ENCODE measurements at regions of chr22 and their contacts with region 1.

Region 1: DNA sequence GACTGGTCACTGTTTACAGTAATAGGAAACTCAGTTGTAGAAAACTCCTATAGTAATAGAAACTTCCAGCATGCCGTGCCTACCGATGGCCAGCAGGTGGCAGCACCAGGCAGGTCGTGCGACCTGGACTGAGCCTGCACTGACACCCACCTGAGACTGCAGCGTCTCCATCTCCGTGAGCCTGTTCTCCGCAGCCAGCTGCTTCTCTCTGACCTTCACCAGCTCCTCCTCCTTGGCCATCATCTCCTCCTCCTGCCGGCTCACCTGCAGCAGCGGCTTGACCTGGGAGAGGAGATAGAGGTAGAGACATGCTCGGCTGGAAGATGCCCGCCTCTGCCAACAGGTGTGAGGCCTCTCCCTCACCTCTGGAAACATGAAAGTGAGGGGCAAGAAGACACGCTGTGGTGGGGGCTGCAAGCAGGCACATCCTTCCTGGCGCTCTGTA is 48.5 kb downstream of the APOL1 start:
- DNase-seq: peak; percentile 73
- H3K4me3 Mint-ChIP-seq: no peak overlapping the region
- H3K27ac Mint-ChIP-seq: no peak overlapping the region
- H3K4me1 Mint-ChIP-seq: peaks cover 7% of the 10 kb centered on the region
- H3K27me3 Mint-ChIP-seq: no peaks in the 10 kb centered on the region
- CTCF ChIP-seq: peak; percentile 94

Region 2: DNA sequence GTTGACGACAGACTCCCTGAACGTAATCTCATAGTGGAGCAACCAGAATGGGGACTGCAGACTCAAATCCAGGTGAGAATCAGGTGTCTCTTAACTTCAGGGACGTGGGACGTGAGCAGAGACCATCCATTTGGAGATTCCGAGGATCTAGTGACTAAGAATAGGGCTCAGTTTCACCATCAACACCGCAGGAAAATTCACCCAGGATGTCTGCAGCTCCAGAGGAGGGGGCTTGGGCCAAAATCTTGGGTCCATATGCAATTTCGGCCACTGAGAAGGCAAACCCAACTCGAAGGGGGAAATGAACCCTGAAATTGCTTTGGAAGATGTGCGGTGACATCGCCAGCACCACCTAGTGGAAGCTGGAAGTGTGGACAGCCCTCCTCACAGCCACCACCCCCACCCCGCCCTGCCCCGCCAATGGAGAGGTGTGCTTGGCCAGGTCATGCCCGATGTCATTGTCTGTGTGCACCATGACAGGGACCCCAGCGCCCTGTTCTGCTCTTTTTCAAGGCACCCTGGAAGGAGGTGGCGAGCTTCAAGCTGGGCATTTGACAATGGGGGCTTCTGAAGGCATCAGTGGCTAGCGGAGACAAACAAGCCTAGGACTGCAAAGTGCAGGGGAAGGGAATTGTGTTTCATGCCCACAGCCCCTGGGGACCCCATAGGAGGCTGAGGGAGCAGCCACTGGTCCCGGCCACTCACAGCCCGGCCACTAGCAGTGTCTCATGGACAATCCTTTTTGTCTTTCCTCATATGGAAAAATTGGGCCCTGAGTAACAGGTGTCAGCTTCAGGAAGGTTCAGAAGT is 23.7 kb before region 1 on chr22:
- CTCF ChIA-PET with region 1: interaction called, 12 read pairs
- POLR2A ChIA-PET with region 1: no interaction called
- intact Hi-C with region 1: no loop called
- DNase-seq: peak; percentile 66
- H3K4me3 Mint-ChIP-seq: no peak overlapping the region
- H3K27ac Mint-ChIP-seq: peak overlapping the region; percentile 19
- H3K4me1 Mint-ChIP-seq: peaks cover 6% of the 10 kb centered on the region
- H3K27me3 Mint-ChIP-seq: no peaks in the 10 kb centered on the region
- CTCF ChIP-seq: peak; percentile 68

Region 3: GRCh38 chr22:36286471-36287224 is 14.8 kb before region 1 on chr22:
- CTCF ChIA-PET with region 1: interaction called, 18 read pairs
- POLR2A ChIA-PET with region 1: interaction called, 3 read pairs
- intact Hi-C with region 1: no loop called
- DNase-seq: peak; percentile 68
- H3K4me3 Mint-ChIP-seq: no peak overlapping the region
- H3K27ac Mint-ChIP-seq: no peak overlapping the region
- H3K4me1 Mint-ChIP-seq: no peaks in the 10 kb centered on the region
- H3K27me3 Mint-ChIP-seq: no peaks in the 10 kb centered on the region
- CTCF ChIP-seq: peak; percentile 89

Region 4: DNA sequence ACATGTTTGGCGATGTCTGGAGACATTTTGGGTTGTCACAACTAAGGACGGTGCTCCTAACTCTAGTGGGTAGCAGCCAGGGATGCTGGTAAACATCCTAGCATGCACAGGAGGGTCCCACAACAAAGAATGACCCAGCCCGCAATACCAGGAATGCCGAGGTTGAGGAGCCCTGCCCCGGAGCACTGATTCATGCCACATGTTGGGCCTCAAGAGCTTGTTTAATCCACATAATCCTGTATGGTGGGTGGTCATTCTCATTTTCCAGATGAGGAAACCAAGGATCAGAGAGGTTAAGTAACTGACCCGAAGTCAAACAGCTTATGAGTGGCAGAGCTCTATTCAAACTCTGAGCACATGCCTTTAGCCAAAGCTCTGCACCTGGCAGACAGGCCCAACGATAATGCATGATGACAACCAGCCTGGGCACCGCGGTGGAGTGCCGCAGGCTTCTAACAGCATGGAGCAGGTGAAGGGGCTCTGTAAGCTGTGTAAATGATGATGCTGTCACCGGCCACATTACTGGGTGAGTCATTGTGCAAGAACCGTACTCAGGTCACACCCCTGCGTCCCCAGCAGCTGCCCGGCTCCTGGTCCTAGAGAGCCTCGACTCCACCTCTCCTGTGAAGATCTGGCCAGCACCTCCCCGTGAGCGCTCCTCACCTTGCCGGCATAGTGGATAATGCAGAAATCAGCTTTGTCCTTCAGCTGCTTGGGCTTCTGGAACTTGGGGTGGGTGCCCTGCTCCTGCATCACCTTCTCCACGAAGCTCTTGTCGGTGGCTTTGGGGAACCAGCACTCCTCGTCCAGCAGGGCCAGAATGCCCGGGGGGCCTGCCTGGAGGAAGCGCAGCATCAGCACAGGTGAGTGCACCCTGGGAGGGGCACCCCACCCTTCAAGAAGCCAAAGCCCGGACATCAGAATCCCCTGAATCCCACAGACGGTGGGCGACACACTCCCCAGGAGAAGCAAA is 10.3 kb after region 1 on chr22:
- CTCF ChIA-PET with region 1: interaction called, 40 read pairs
- POLR2A ChIA-PET with region 1: interaction called, 7 read pairs
- intact Hi-C with region 1: no loop called
- DNase-seq: no peak
- H3K4me3 Mint-ChIP-seq: no peak overlapping the region
- H3K27ac Mint-ChIP-seq: no peak overlapping the region
- H3K4me1 Mint-ChIP-seq: no peaks in the 10 kb centered on the region
- H3K27me3 Mint-ChIP-seq: no peaks in the 10 kb centered on the region
- CTCF ChIP-seq: no peak

Region 5: DNA sequence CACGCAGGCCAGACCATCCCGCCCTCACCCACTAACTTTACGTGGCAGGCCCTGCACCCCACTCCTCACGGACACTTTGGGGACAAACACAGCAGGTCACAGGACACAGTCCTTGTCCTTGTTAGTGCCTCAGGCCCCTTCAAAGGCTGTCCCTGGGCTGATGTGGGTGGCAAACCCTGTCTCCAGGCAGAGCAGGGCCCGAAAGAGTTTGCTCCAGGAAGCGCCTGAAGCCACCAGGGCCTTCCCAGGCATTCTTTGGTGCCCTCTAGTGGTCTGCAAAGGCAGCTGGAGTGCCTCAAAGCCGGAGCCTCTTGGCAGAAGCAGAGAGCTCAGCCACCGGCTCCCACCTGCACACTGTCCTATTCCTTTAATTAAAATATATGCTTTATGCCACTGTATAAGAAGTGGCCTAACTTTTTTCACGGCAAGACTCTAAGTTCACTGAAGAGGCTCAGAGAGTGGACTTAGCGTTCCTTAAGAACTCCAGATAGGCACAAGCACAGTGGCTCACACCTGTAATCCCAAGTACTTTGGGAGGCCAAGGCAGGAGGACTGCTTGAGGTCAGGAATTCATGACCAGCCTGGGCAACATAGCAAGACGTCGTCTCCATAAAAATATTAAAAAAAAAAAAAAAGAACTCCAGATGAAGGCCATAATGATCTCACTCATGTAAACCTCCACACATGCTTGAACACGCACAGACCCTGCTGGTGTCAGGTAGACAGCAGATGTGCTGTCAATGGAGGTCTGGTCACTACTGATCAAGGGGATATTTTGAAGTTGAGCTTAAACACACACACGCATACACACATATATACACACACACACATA is 169.0 kb after region 1 on chr22:
- CTCF ChIA-PET with region 1: interaction called, 180 read pairs
- POLR2A ChIA-PET with region 1: interaction called, 14 read pairs
- intact Hi-C with region 1: loop called (anchors 1 kb)
- DNase-seq: peak; percentile 85
- H3K4me3 Mint-ChIP-seq: no peak overlapping the region
- H3K27ac Mint-ChIP-seq: peak overlapping the region; percentile 51
- H3K4me1 Mint-ChIP-seq: peaks cover 48% of the 10 kb centered on the region
- H3K27me3 Mint-ChIP-seq: no peaks in the 10 kb centered on the region
- CTCF ChIP-seq: peak; percentile 91

Region 6: GRCh38 chr22:36486619-36487384 is 185.4 kb after region 1 on chr22:
- CTCF ChIA-PET with region 1: interaction called, 10 read pairs
- POLR2A ChIA-PET with region 1: no interaction called
- intact Hi-C with region 1: no loop called
- DNase-seq: peak; percentile 48
- H3K4me3 Mint-ChIP-seq: no peak overlapping the region
- H3K27ac Mint-ChIP-seq: no peak overlapping the region
- H3K4me1 Mint-ChIP-seq: peaks cover 5% of the 10 kb centered on the region
- H3K27me3 Mint-ChIP-seq: no peaks in the 10 kb centered on the region
- CTCF ChIP-seq: peak; percentile 40

Measured in MCF 10A (cell line).